ENCODE measurements at regions of chr20 and their contacts with region 1.

Region 1: GRCh38 chr20:50385733-50386640 is 124.2 kb upstream of the PTPN1 start:
- DNase-seq: peak; percentile 85 to 87
- ATAC-seq: peak; percentile 88 to 96 (median 93)
- H3K4me3 ChIP-seq: no peak overlapping the region
- H3K4me3 Mint-ChIP-seq: peak overlapping the region; percentile 70
- H3K27ac ChIP-seq: peak overlapping the region; percentile 75
- H3K27ac Mint-ChIP-seq: peak overlapping the region; percentile 69 to 89
- H3K4me1 ChIP-seq: peaks cover 62% of the 10 kb centered on the region
- H3K4me1 Mint-ChIP-seq: peaks cover 72 to 75% of the 10 kb centered on the region in 2 donors
- H3K27me3 ChIP-seq: no peaks in the 10 kb centered on the region
- H3K27me3 Mint-ChIP-seq: peaks cover 0 to 3% of the 10 kb centered on the region in 2 donors
- CTCF ChIP-seq: no peak

Region 2: GRCh38 chr20:50110141-50110925 is 275.7 kb before region 1 on chr20:
- intact Hi-C with region 1: loop called (anchors 1 kb)
- DNase-seq: peak; percentile 58 to 81
- ATAC-seq: peak; percentile 62 to 82 (median 77)
- H3K4me3 ChIP-seq: no peak overlapping the region
- H3K4me3 Mint-ChIP-seq: peak overlapping the region; percentile 100
- H3K27ac ChIP-seq: peak overlapping the region; percentile 92
- H3K27ac Mint-ChIP-seq: peak overlapping the region; percentile 95 to 99
- H3K4me1 ChIP-seq: peaks cover 78% of the 10 kb centered on the region
- H3K4me1 Mint-ChIP-seq: peaks cover 87 to 95% of the 10 kb centered on the region in 2 donors
- H3K27me3 ChIP-seq: no peaks in the 10 kb centered on the region
- H3K27me3 Mint-ChIP-seq: no peaks in the 10 kb centered on the region
- CTCF ChIP-seq: no peak

Region 3: GRCh38 chr20:50189681-50190582 is 196.1 kb before region 1 on chr20:
- intact Hi-C with region 1: loop called (anchors 2 kb)
- DNase-seq: peak; percentile 80 to 88
- ATAC-seq: peak; percentile 65 to 85 (median 71)
- H3K4me3 ChIP-seq: no peak overlapping the region
- H3K4me3 Mint-ChIP-seq: peak overlapping the region; percentile 57
- H3K27ac ChIP-seq: peak overlapping the region; percentile 36
- H3K27ac Mint-ChIP-seq: peak overlapping the region in 1 of 2 donors; percentile 94
- H3K4me1 ChIP-seq: peaks cover 27% of the 10 kb centered on the region
- H3K4me1 Mint-ChIP-seq: peaks cover 28 to 29% of the 10 kb centered on the region in 2 donors
- H3K27me3 ChIP-seq: peaks cover 2% of the 10 kb centered on the region
- H3K27me3 Mint-ChIP-seq: peaks cover 9 to 13% of the 10 kb centered on the region in 2 donors
- CTCF ChIP-seq: peak; percentile 74

Region 4: GRCh38 chr20:50311326-50312019 is 74.5 kb before region 1 on chr20:
- intact Hi-C with region 1: loop called (anchors 2 kb)
- DNase-seq: no peak
- ATAC-seq: no peak
- H3K4me3 ChIP-seq: no peak overlapping the region
- H3K4me3 Mint-ChIP-seq: no peak overlapping the region
- H3K27ac ChIP-seq: no peak overlapping the region
- H3K27ac Mint-ChIP-seq: peak overlapping the region in 1 of 2 donors; percentile 23
- H3K4me1 ChIP-seq: peaks cover 19% of the 10 kb centered on the region
- H3K4me1 Mint-ChIP-seq: peaks cover 19 to 30% of the 10 kb centered on the region in 2 donors
- H3K27me3 ChIP-seq: no peaks in the 10 kb centered on the region
- H3K27me3 Mint-ChIP-seq: peaks cover 32 to 50% of the 10 kb centered on the region in 2 donors
- CTCF ChIP-seq: no peak

Region 5: DNA sequence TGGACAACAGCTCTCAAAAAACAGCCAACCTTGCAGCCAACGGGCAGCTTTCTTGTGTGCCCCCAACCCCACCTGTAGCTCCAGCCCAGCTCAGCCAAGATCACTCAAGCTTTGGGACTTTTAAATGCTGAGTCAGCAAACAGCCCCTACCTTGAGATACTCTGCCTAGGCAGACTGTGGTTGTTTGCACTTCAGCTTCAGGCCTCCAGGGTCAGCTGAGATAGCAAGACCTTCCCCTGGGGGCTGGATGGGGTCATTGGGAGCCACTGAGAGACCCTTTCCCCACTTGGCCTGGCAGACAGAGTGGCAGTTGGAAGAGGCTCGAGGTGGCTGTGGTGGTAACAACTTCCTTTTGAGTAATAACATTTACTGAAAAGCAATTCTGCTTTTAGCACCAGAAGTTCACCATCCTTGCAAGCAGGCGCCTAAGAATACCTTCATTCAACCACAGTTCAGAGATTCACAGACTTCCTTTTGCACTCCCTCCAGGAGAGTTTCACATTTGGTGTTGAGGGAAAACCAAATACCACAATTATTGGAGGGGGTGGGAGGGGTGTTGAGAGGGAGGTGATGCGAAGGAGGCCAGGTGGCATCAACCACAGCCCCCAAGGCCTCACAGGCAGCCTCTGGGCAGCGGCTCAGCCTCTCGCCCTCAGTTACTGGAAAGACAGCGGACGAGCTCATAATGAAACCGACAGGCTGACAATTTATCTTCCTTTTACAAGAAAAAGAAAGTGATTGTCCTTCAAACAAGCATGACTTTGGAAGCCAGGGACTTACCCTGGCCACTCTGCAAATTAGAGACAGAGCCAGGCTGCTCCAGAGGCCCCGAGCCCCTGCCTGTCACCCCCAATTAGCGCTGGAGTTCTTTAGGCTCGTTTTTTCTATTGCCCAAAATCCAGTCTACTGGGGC is 47.3 kb before region 1 on chr20:
- intact Hi-C with region 1: loop called (anchors 1 kb)
- DNase-seq: peak; percentile 43 to 53
- ATAC-seq: peak; percentile 70 to 81 (median 75)
- H3K4me3 ChIP-seq: no peak overlapping the region
- H3K4me3 Mint-ChIP-seq: peak overlapping the region; percentile 65
- H3K27ac ChIP-seq: peak overlapping the region; percentile 14
- H3K27ac Mint-ChIP-seq: peak overlapping the region; percentile 77 to 81
- H3K4me1 ChIP-seq: peaks cover 41% of the 10 kb centered on the region
- H3K4me1 Mint-ChIP-seq: peaks cover 27 to 40% of the 10 kb centered on the region in 2 donors
- H3K27me3 ChIP-seq: no peaks in the 10 kb centered on the region
- H3K27me3 Mint-ChIP-seq: peaks cover 0 to 31% of the 10 kb centered on the region in 2 donors
- CTCF ChIP-seq: no peak

Region 6: GRCh38 chr20:50348096-50348495 is 37.9 kb before region 1 on chr20:
- intact Hi-C with region 1: loop called (anchors 2 kb)
- DNase-seq: no peak
- ATAC-seq: no peak
- H3K4me3 ChIP-seq: no peak overlapping the region
- H3K4me3 Mint-ChIP-seq: no peak overlapping the region
- H3K27ac ChIP-seq: no peak overlapping the region
- H3K27ac Mint-ChIP-seq: peak overlapping the region in 1 of 2 donors; percentile 8
- H3K4me1 ChIP-seq: peaks cover 44% of the 10 kb centered on the region
- H3K4me1 Mint-ChIP-seq: peaks cover 32 to 48% of the 10 kb centered on the region in 2 donors
- H3K27me3 ChIP-seq: peaks cover 41% of the 10 kb centered on the region
- H3K27me3 Mint-ChIP-seq: peaks cover 23 to 54% of the 10 kb centered on the region in 2 donors
- CTCF ChIP-seq: no peak

Region 7: GRCh38 chr20:50450881-50451752 is 65.1 kb after region 1 on chr20:
- intact Hi-C with region 1: loop called (anchors 2 kb)
- DNase-seq: peak; percentile 50 to 52
- ATAC-seq: peak; percentile 84 to 93 (median 86)
- H3K4me3 ChIP-seq: no peak overlapping the region
- H3K4me3 Mint-ChIP-seq: peak overlapping the region; percentile 63
- H3K27ac ChIP-seq: no peak overlapping the region
- H3K27ac Mint-ChIP-seq: peak overlapping the region; percentile 56 to 60
- H3K4me1 ChIP-seq: peaks cover 30% of the 10 kb centered on the region
- H3K4me1 Mint-ChIP-seq: peaks cover 26 to 36% of the 10 kb centered on the region in 2 donors
- H3K27me3 ChIP-seq: peaks cover 46% of the 10 kb centered on the region
- H3K27me3 Mint-ChIP-seq: peaks cover 68 to 88% of the 10 kb centered on the region in 2 donors
- CTCF ChIP-seq: no peak

Measured in natural killer cell (primary cell).